ENCODE measurements at regions of chr1 and their contacts with region 1.

Region 1: DNA sequence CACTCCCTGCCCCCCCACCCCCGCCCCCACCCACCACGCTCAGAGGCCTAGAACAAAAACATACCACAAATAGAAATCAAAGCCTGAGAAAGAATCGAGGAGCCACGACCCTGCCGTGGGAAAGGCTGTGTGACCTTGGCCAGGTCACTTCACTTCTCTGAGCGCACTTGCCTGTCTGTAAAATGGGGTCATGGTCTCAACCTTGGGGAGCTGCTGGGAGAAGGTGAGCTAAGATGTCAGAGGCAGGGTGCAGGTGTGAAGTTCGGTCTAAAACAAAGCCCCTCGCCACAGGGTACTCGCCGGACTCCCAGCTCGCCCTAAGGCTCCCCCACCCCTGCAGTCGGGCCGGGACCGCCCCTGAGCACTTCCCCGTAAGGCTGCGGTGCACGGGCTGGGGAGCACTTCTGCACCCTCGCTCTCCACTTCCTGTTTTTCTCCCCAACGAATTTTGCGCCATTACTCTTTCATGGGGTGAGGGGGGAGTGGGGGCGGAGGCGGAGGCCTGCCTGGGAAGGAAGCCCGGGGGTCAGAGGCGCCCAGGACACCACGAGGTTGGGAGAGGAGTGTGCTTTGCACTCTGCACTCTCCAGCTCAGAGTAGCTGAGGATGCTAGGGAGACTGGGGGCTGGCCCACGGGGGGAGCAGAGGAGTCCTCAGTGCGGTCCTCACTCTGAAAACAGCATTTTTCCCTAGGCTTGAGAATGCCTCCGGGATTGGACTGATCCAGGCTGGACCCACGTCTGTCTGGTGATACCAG is 21.9 kb upstream of the PIK3CD start:
- DNase-seq: peak; percentile 71
- ATAC-seq: peak; percentile 45
- H3K4me3 ChIP-seq: peak overlapping the region; percentile 86
- H3K27ac ChIP-seq: peak overlapping the region; percentile 98
- H3K4me1 ChIP-seq: peaks cover 37% of the 10 kb centered on the region
- H3K27me3 ChIP-seq: no peaks in the 10 kb centered on the region
- CTCF ChIP-seq: no peak
- EP300 ChIP-seq: peak; percentile 57 to 64; a peak in 1 of 4 replicates
- POLR2A ChIP-seq: peak; percentile 76
- RAD21 ChIP-seq: no peak

Region 2: DNA sequence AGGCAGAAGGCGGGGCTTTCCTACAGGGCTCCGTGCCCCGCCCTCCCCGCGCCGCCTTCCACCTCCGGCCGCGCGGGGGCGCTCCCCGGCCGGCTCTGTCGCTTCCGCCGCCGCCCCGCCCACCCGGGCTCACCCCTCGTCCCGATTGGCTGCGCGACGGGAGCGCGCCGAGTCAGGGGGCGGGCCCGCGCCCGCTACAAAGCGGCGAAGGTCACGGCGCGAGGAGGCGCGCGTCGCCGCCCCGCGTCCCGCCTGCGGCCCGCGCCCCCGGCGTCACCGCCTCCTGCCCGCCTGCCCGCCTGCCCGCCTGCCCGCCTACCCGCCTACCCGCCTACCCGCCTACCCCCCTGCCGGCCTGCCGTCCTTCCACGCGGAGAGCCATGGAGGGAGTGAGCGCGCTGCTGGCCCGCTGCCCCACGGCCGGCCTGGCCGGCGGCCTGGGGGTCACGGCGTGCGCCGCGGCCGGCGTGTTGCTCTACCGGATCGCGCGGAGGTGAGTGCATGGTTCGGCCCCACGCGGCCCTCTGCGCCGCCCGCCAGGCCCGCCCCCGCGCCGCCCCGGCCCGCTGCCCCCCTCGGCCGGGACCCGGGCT is 41.0 kb before region 1 on chr1 and contains the start of gene TMEM201:
- CTCF ChIA-PET with region 1: interaction called, 6 read pairs
- POLR2A ChIA-PET with region 1: interaction called, 5 read pairs
- RAD21 ChIA-PET with region 1: interaction called, 13 read pairs
- SMC1A ChIA-PET with region 1: interaction called, 4 read pairs
- in situ Hi-C with region 1: no loop called
- intact Hi-C with region 1: no loop called
- DNase-seq: peak; percentile 46
- ATAC-seq: peak; percentile 78
- H3K4me3 ChIP-seq: peak within 1 kb of the TSS; percentile 73
- H3K27ac ChIP-seq: peak within 1 kb of the TSS; percentile 67
- H3K4me1 ChIP-seq: peaks cover 26% of the 10 kb centered on the region
- H3K27me3 ChIP-seq: no peaks in the 10 kb centered on the region
- CTCF ChIP-seq: peak; percentile 61 to 89 (median 66); a peak in 5 of 6 replicates
- EP300 ChIP-seq: no peak
- POLR2A ChIP-seq: peak; percentile 72
- RAD21 ChIP-seq: peak; percentile 40; the same call in 1 of the 2 replicates
- polyA plus RNA-seq, gene TMEM201: 0.13 to 0.33 TPM

Region 3: GRCh38 chr1:9643351-9644256 is 14.0 kb after region 1 on chr1:
- CTCF ChIA-PET with region 1: interaction called, 18 read pairs
- POLR2A ChIA-PET with region 1: interaction called, 11 read pairs
- RAD21 ChIA-PET with region 1: interaction called, 9 read pairs
- SMC1A ChIA-PET with region 1: interaction called, 36 read pairs
- in situ Hi-C with region 1: no loop called
- intact Hi-C with region 1: no loop called
- DNase-seq: no peak
- ATAC-seq: peak; percentile 55
- H3K4me3 ChIP-seq: no peak overlapping the region
- H3K27ac ChIP-seq: no peak overlapping the region
- H3K4me1 ChIP-seq: peaks cover 29% of the 10 kb centered on the region
- H3K27me3 ChIP-seq: no peaks in the 10 kb centered on the region
- CTCF ChIP-seq: no peak
- EP300 ChIP-seq: no peak
- POLR2A ChIP-seq: no peak
- RAD21 ChIP-seq: no peak

Region 4: GRCh38 chr1:9680828-9681227 is 51.2 kb after region 1 on chr1:
- CTCF ChIA-PET with region 1: interaction called, 50 read pairs
- POLR2A ChIA-PET with region 1: interaction called, 28 read pairs
- RAD21 ChIA-PET with region 1: interaction called, 37 read pairs
- SMC1A ChIA-PET with region 1: interaction called, 44 read pairs
- in situ Hi-C with region 1: no loop called
- intact Hi-C with region 1: loop called (anchors 2 kb)
- DNase-seq: no peak
- ATAC-seq: peak; percentile 88
- H3K4me3 ChIP-seq: no peak overlapping the region
- H3K27ac ChIP-seq: no peak overlapping the region; the same call in 1 of the 2 replicates
- H3K4me1 ChIP-seq: peaks cover 17% of the 10 kb centered on the region
- H3K27me3 ChIP-seq: no peaks in the 10 kb centered on the region
- CTCF ChIP-seq: no peak
- EP300 ChIP-seq: no peak
- POLR2A ChIP-seq: no peak
- RAD21 ChIP-seq: no peak

Region 5: DNA sequence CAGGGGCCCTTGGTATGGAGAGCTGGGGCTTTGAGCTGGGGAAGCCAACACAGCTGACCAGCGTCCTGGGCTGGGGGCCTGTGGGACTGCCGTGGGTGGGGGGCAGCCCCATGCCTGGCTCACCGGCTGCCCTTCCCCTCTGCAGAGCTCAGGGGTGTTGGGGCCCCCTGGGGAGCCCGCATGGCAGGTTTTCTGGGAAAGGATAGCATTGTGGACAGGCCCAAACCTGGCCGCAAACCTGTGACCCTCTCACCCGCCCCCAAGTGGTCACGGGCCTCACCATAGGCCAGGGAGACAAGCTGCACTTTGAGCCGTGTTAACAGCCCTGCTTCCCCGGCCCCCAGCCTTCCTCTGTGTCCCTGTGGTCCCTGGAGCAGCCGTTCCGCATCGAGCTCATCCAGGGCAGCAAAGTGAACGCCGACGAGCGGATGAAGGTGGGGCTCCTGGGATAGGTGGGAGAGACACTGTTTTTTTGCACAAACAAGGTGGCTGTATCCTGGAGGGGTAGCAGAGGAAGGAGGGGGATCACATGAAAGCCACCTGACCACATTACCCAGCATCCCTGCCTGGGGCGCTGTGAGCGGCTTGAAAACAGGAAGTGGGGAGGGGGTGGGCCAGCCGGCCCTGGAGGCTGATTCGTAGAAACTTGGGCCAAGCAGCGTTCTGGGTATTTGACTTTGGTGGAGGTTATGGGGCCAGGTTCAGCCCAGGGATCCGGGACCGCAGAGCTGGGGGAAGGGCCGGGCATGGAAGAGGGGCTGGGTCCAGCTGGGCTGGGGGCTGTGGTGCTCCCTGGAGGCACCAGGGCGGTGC is 87.8 kb after region 1 on chr1:
- CTCF ChIA-PET with region 1: interaction called, 16 read pairs
- POLR2A ChIA-PET with region 1: interaction called, 3 read pairs
- RAD21 ChIA-PET with region 1: interaction called, 20 read pairs
- SMC1A ChIA-PET with region 1: interaction called, 7 read pairs
- in situ Hi-C with region 1: no loop called
- intact Hi-C with region 1: loop called (anchors 1 kb)
- DNase-seq: peak; percentile 39
- ATAC-seq: peak; percentile 80
- H3K4me3 ChIP-seq: 0 out of 2 replicates have a peak overlapping the region, but pooled peaks have one; percentile 34
- H3K27ac ChIP-seq: peak overlapping the region; percentile 71
- H3K4me1 ChIP-seq: peaks cover 23% of the 10 kb centered on the region
- H3K27me3 ChIP-seq: no peaks in the 10 kb centered on the region
- CTCF ChIP-seq: 0 out of 6 replicates have a peak, but pooled peaks of 1 of the 3 experiments have one; percentile 7
- EP300 ChIP-seq: peak in 1 of 2 experiments; percentile 31; a peak in 1 of 4 replicates
- POLR2A ChIP-seq: peak; percentile 68
- RAD21 ChIP-seq: no peak

Region 6: DNA sequence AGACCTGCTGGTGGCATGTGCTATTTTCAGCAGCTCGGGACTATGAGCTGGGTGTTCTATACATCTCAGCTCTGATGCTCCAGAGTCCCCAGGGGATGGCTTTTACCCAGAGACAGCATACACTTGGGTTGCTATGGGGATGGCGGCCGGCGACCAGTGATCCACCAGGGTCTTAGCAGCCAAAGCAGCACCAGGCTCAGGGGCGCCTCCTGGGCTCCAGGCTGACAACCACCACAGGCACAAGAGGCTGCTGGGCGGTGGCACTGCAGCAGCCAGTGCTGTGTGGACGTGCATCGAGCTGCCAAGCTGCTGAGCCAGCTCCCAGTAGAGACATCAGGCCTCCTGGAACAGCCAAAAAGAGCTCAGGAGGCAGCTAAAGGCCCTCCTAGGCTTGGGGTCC is 231.7 kb after region 1 on chr1:
- CTCF ChIA-PET with region 1: interaction called, 43 read pairs
- POLR2A ChIA-PET with region 1: interaction called, 3 read pairs
- RAD21 ChIA-PET with region 1: interaction called, 9 read pairs
- SMC1A ChIA-PET with region 1: interaction called, 5 read pairs
- in situ Hi-C with region 1: loop called (anchors 5 kb)
- intact Hi-C with region 1: loop called (anchors 2 kb)
- DNase-seq: no peak
- ATAC-seq: no peak
- H3K4me3 ChIP-seq: no peak overlapping the region
- H3K27ac ChIP-seq: no peak overlapping the region
- H3K4me1 ChIP-seq: peaks cover 32% of the 10 kb centered on the region
- H3K27me3 ChIP-seq: no peaks in the 10 kb centered on the region
- CTCF ChIP-seq: no peak
- EP300 ChIP-seq: no peak
- POLR2A ChIP-seq: no peak
- RAD21 ChIP-seq: no peak

Measured in GM12878 (cell line).